IMR-90 (cell line): ENCODE measurements at regions of chr10 and their contacts with region 1.

Region 1: DNA sequence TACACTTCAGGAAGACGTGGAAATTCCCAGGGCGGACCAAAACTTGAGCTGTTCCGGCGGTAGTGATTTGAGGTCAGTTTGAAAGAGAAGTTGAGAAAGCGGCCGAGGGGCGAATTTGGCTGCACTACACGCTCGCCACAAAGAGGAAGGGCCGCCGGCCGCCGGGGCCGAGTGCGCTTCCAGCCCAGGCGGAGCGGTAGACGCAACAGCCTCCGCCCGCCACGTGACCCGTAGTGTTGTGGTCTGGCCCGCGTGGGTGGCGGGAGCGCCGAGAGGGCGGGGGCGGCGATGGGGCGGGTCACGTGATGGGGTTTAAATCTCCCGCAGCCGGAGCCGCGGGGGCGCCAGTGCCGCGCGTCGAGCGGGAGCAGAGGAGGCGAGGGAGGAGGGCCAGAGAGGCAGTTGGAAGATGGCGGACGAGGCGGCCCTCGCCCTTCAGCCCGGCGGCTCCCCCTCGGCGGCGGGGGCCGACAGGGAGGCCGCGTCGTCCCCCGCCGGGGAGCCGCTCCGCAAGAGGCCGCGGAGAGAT is at the start of gene SIRT1:
- DNase-seq: peak; percentile 90
- ATAC-seq: peak; percentile 91
- H3K4me3 ChIP-seq: peak within 1 kb of the TSS; percentile 56
- H3K27ac ChIP-seq: peak within 1 kb of the TSS; percentile 55
- H3K4me1 ChIP-seq: peaks cover 3% of the 10 kb centered on the region; the same call in 1 of the 2 replicates
- H3K27me3 ChIP-seq: no peaks in the 10 kb centered on the region
- CTCF ChIP-seq: no peak
- POLR2A ChIP-seq: peak; percentile 98
- RAD21 ChIP-seq: no peak
- total RNA-seq, gene SIRT1: 12.9 and 20.6 TPM in 2 replicates

Region 2: DNA sequence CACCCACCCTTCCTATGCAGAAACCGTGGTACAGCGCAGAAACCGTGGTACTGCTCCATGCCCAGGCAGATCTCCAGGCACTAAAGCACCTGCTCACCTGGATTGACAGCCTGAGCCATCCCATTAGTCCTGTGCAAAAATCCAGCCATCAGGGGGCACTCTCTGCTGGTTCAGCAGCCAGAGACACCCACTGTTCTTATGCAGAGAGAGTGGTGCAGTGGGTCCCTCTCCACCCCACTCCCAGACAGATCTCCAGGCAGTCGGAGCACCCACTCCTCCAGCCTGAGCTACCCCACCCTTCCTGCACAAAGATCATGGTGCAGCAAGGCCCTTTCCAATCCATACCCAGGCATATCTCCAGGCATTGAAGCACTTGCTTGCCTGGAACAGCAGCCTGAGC is 408.2 kb before region 1 on chr10:
- CTCF ChIA-PET with region 1: no interaction called
- POLR2A ChIA-PET with region 1: no interaction called
- dilution Hi-C with region 1: no loop called
- in situ Hi-C with region 1: no loop called
- intact Hi-C with region 1: no loop called
- DNase-seq: no peak
- ATAC-seq: no peak
- H3K4me3 ChIP-seq: no peak overlapping the region
- H3K27ac ChIP-seq: no peak overlapping the region
- H3K4me1 ChIP-seq: no peaks in the 10 kb centered on the region
- H3K27me3 ChIP-seq: no peaks in the 10 kb centered on the region
- CTCF ChIP-seq: no peak
- POLR2A ChIP-seq: no peak
- RAD21 ChIP-seq: no peak

Region 3: GRCh38 chr10:68110027-68110426 is 225.7 kb after region 1 on chr10:
- CTCF ChIA-PET with region 1: no interaction called
- POLR2A ChIA-PET with region 1: interaction called, 11 read pairs
- dilution Hi-C with region 1: no loop called
- in situ Hi-C with region 1: no loop called
- intact Hi-C with region 1: no loop called
- DNase-seq: peak; percentile 81
- ATAC-seq: peak; percentile 46
- H3K4me3 ChIP-seq: peak overlapping the region; percentile 37; the same call in 1 of the 2 replicates
- H3K27ac ChIP-seq: peak overlapping the region; percentile 2; the same call in 1 of the 2 replicates
- H3K4me1 ChIP-seq: peaks cover 9% of the 10 kb centered on the region
- H3K27me3 ChIP-seq: no peaks in the 10 kb centered on the region
- CTCF ChIP-seq: no peak
- POLR2A ChIP-seq: no peak
- RAD21 ChIP-seq: no peak

Region 4: DNA sequence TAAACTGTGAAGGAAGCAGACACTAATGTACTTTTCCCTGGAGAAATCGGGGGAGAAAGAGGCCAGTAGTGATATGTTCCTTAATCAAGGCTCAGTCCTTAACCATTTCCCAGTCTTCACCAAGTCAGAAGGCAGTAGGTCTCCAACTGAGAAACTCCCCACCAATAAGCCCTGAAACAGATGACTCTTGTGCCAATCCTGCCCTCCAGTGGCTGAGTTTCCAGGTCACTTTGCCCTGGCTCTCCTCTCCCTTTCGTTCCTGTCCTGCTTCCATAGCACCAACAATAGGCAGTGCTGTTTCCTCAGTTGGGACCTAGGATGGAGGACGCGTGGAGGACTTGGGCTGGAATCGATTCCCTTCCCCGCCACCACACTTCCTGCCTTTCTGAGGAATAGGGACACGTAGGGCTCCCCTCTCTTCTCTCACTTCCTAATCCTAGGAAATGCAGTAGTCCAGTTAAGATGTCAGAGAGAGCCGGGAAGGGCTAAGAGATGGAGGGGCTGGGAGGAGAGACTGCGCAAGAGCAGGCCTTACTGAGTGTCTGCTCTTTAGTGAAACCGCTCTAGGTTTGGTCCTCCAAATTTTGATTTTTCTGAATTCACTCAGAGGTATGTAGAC is 324.2 kb after region 1 on chr10:
- CTCF ChIA-PET with region 1: no interaction called
- POLR2A ChIA-PET with region 1: no interaction called
- dilution Hi-C with region 1: no loop called
- in situ Hi-C with region 1: no loop called
- intact Hi-C with region 1: no loop called
- DNase-seq: peak; percentile 79
- ATAC-seq: peak; percentile 94
- H3K4me3 ChIP-seq: no peak overlapping the region
- H3K27ac ChIP-seq: no peak overlapping the region
- H3K4me1 ChIP-seq: peaks cover 2% of the 10 kb centered on the region
- H3K27me3 ChIP-seq: no peaks in the 10 kb centered on the region
- CTCF ChIP-seq: peak; percentile 76
- POLR2A ChIP-seq: no peak
- RAD21 ChIP-seq: peak; percentile 87

Region 5: DNA sequence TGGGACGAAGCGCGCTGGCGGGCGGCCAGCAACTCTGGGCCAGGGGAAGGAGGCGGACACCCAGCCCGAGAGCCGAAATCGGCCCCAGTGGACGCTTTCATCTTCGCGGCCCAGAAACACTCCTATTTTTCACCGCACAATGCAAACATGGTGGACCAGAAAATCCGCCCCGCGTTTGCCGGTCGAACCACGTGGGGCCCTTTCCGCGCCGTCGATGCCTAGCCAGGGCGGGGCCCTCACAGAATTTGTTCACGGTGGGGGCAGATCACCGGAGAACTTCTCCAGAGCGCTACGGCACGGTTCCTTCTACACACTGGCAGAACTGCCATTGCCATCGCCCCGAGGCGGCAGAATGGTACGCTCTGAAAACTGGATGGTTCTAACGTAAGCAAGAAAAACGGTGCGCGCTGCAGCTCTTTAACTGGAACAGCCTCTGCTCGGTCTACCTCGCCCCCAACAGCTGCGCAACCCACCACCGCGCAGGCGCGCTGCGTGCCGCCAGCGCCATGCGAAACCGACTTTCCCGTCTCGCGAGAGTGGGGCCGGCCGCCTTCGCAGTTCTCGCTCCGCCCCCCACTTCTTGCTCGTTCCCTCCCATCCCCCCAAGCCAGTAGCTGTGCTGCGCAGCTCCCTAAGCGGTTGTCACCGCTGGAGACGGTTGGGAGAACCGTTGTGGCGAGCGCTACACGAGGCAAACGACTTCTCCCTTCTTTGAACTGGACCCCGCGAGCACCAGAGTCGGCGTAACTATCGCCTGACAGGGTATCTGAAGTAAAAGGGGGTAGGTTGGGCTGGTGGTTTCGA is 447.3 kb after region 1 on chr10 and contains the start of gene HNRNPH3:
- CTCF ChIA-PET with region 1: interaction called, 3 read pairs
- POLR2A ChIA-PET with region 1: no interaction called
- dilution Hi-C with region 1: no loop called
- in situ Hi-C with region 1: no loop called
- intact Hi-C with region 1: loop called (anchors 10 kb)
- DNase-seq: peak; percentile 97
- ATAC-seq: peak; percentile 86
- H3K4me3 ChIP-seq: peak within 1 kb of the TSS; percentile 98
- H3K27ac ChIP-seq: peak within 1 kb of the TSS; percentile 97
- H3K4me1 ChIP-seq: peaks cover 12% of the 10 kb centered on the region
- H3K27me3 ChIP-seq: no peaks in the 10 kb centered on the region
- CTCF ChIP-seq: no peak
- POLR2A ChIP-seq: peak; percentile 99
- RAD21 ChIP-seq: no peak
- total RNA-seq, gene HNRNPH3: 10.6 and 23.6 TPM in 2 replicates